Motor neuron (in vitro differentiated cells): ENCODE measurements at regions of chr3 and their contacts with region 1.

Region 1: DNA sequence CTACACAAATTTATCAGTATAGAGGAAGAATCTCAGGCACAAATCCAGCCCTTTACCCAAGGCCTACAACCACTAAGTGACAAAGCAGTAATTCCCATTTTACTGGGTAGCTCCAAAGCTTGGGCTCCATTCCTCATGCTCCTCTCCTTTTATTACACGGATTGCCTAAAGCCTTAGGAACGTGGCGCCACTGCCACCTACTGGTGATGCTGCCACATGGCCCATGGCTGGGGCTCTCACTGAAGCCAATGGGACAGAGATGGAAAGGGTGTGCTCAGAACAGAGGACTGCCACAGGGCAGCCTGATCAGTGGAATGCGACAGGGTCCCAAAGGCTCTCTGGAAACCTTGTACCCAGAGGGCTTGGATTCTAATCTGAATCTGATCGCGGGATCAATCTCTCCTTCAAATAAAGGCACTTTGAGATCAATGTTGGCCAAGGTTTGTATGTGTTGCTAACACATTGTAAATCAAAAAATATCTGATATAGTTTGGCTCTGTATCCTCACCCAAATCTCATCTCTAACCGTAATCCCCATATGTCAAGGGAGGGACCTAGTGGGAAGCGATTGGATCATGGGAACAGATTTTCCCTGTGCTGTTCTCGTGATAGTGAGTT is 33.5 kb upstream of the LYZL4 start:
- ATAC-seq: peak; percentile 87 to 99 (median 96)
- H3K4me3 ChIP-seq: no peak overlapping the region
- H3K27ac ChIP-seq: no peak overlapping the region
- H3K4me1 ChIP-seq: peaks cover 4 to 9% of the 10 kb centered on the region in 2 donors

Region 2: GRCh38 chr3:42229942-42230688 is 213.8 kb before region 1 on chr3:
- in situ Hi-C with region 1: loop called in 4 of 9 experiments (anchors 10 to 25 kb)
- ATAC-seq: peak in 6 of 8 experiments; percentile 25 to 85 (median 72)
- H3K4me3 ChIP-seq: no peak overlapping the region
- H3K27ac ChIP-seq: no peak overlapping the region
- H3K4me1 ChIP-seq: no peaks in the 10 kb centered on the region

Region 3: DNA sequence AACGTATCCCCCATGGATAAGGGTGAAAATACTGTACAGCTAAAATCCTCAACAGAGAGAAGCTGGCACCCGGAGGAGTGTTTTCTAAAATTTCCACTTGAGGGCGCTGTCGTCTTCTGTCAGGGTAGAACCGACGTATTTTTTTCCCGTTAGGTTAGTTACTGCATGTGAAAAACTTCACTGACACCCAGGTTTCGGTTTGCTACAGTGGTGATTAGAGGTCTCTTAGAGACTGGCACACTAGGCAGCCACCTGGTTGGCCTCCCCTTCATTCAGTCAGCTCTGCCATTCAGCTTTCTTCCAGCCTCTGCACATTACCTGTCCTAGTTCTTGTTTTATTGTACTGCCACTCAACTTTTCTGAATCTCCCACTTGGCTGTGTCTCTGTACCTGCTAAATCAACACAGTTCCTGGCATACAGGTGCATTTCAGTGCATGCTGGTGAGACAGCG is 196.3 kb before region 1 on chr3:
- in situ Hi-C with region 1: loop called in 6 of 9 experiments (anchors 5 to 25 kb)
- ATAC-seq: peak in 7 of 8 experiments; percentile 54 to 86 (median 78)
- H3K4me3 ChIP-seq: no peak overlapping the region
- H3K27ac ChIP-seq: no peak overlapping the region
- H3K4me1 ChIP-seq: peaks cover 0 to 2% of the 10 kb centered on the region in 2 donors

Region 4: DNA sequence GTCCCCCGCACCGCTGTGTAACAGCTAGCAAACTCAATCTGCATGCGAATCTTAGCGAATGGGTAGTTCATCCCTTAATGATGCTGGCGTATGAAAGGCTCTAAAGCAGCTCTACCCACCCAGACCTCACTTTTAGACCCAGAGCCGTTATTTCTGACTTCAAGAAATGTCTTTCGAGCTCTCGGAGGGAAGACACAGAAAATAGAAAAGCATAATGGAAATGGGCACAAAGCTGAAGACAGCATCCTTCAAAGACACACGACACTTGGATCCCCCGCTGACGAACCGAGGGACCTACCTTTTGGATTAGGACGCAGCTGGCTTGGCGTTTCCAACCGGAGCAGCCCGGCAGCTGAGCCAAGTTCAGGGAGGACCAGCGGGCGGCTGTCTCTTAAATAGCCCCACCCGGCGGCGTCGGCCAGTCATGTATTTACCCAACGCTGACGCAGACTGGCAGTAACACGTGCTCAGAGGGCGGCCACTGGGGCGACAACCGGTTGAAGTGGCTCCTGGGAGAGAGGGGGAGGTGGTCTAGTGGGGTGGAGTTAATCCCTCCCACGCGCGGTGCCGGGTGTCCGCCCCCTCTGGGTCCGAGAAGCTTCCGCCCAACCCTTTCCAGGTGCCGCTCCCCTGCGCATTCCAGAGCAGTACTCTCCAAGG is 179.4 kb before region 1 on chr3:
- in situ Hi-C with region 1: loop called in 2 of 9 experiments (anchors 25 kb)
- ATAC-seq: peak in 7 of 8 experiments; percentile 45 to 98 (median 95)
- H3K4me3 ChIP-seq: peak overlapping the region in 4 of 5 donors; percentile 5 to 23 (median 16)
- H3K27ac ChIP-seq: no peak overlapping the region
- H3K4me1 ChIP-seq: peaks cover 0 to 3% of the 10 kb centered on the region in 2 donors